Gastrocnemius medialis (tissue), 4 donors: ENCODE measurements at regions of chr14 and their contacts with region 1.

Region 1: DNA sequence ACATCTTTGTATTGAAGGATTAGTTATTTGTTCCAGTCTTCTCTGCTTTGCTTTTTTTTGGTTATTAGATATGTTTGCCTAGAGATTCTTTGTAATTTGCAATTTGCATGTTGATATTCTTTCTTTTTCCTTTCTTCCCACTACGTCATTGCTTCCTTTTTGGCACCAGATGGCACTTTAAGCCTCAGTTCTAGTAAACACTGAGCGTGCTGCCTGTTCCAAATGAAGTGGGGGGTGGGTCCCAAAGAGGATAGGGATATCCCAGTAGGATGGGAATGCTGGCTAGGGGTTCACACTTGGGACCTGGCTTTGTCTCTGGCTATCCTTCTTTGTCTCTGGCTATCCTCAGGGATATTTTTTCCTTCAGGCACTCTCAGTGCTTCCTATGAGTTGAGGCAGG is 17.0 kb downstream of the EAPP start:
- DNase-seq: no peak
- ATAC-seq: no peak
- H3K4me3 ChIP-seq: no peak overlapping the region
- H3K27ac ChIP-seq: no peak overlapping the region
- H3K4me1 ChIP-seq: no peaks in the 10 kb centered on the region
- H3K27me3 ChIP-seq: no peaks in the 10 kb centered on the region
- CTCF ChIP-seq: no peak
- POLR2A ChIP-seq: no peak

Region 2: GRCh38 chr14:34569750-34570149 is 47.3 kb after region 1 on chr14:
- in situ Hi-C with region 1: loop called in 1 of 4 experiments (anchors 10 kb)
- intact Hi-C with region 1: no loop called
- DNase-seq: no peak
- ATAC-seq: no peak
- H3K4me3 ChIP-seq: no peak overlapping the region
- H3K27ac ChIP-seq: no peak overlapping the region
- H3K4me1 ChIP-seq: no peaks in the 10 kb centered on the region
- H3K27me3 ChIP-seq: no peaks in the 10 kb centered on the region
- CTCF ChIP-seq: no peak
- POLR2A ChIP-seq: no peak